CD4-positive, alpha-beta T cell (primary cell): ENCODE measurements at regions of chr11 and their contacts with region 1.

Region 1: GRCh38 chr11:34051349-34052035 is at the start of gene CAPRIN1:
- DNase-seq: peak; percentile 70 to 93 (median 80)
- ATAC-seq: peak; percentile 69
- H3K4me3 ChIP-seq: peak within 1 kb of the TSS; percentile 99
- H3K4me3 Mint-ChIP-seq: peak within 1 kb of the TSS; percentile 95
- H3K27ac ChIP-seq: peak within 1 kb of the TSS; percentile 98 to 99
- H3K27ac Mint-ChIP-seq: peak within 1 kb of the TSS; percentile 100
- H3K4me1 ChIP-seq: peaks cover 25% of the 10 kb centered on the region
- H3K4me1 Mint-ChIP-seq: peaks cover 26% of the 10 kb centered on the region
- H3K27me3 ChIP-seq: no peaks in the 10 kb centered on the region
- H3K27me3 Mint-ChIP-seq: no peaks in the 10 kb centered on the region
- CTCF ChIP-seq: no peak
- total RNA-seq, gene CAPRIN1: 107 TPM

Region 2: DNA sequence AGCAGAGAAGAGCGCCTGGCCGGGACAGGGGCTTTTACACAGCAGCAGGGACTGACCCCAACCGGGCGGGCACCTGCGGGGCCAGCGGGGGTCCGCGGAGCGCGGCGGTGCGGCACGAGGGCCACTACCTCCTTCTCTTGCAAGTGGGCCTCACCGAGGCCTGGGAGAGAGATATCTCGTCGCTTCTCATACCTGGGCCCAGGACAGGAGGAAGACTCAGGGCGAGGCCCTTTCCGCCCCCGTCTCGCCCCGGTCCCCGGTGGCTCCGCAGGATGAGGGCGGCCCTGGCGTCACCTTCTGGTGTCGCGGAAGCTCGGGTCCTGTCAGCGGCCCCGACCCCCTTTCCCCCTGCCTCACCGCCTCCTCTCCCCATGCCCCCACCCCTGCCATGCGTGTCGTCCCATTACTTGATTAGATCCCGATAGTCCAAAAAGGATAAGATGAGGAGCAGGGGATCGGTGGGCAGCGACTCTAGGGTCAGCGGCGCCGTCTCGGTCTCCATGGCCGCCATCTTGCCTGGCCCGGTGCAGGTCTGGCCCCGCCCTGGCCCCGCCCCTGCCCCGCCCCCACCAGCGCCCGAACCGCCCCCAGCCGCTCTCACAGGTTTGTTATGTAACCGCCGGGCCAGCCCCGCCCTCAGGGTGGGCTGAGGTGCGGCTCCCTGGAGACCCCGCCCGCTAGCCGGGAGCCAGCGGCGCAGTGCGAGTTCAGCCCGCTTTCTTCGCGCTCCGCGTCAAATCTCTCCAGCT is 277.3 kb before region 1 on chr11 and contains the start of gene FBXO3:
- CTCF ChIA-PET with region 1: no interaction called
- POLR2A ChIA-PET with region 1: interaction called, 4 read pairs
- intact Hi-C with region 1: loop called in 1 of 2 experiments (anchors 5 kb)
- DNase-seq: peak; percentile 78 to 95 (median 86)
- ATAC-seq: peak; percentile 86
- H3K4me3 ChIP-seq: peak within 1 kb of the TSS; percentile 73
- H3K4me3 Mint-ChIP-seq: peak within 1 kb of the TSS; percentile 97
- H3K27ac ChIP-seq: peak within 1 kb of the TSS; percentile 64 to 75
- H3K27ac Mint-ChIP-seq: peak within 1 kb of the TSS; percentile 97
- H3K4me1 ChIP-seq: peaks cover 41% of the 10 kb centered on the region
- H3K4me1 Mint-ChIP-seq: peaks cover 61% of the 10 kb centered on the region
- H3K27me3 ChIP-seq: peaks cover 0 to 7% of the 10 kb centered on the region in 2 experiments
- H3K27me3 Mint-ChIP-seq: peaks cover 8% of the 10 kb centered on the region
- CTCF ChIP-seq: no peak
- total RNA-seq, gene FBXO3: 62.0 to 63.4 TPM

Region 3: GRCh38 chr11:34063061-34063795 is 11.7 kb after region 1 on chr11:
- CTCF ChIA-PET with region 1: interaction called, 5 read pairs
- POLR2A ChIA-PET with region 1: interaction called, 13 read pairs
- intact Hi-C with region 1: no loop called
- DNase-seq: no peak
- ATAC-seq: no peak
- H3K4me3 ChIP-seq: no peak overlapping the region
- H3K4me3 Mint-ChIP-seq: peak overlapping the region; percentile 3
- H3K27ac ChIP-seq: no peak overlapping the region
- H3K27ac Mint-ChIP-seq: peak overlapping the region; percentile 66
- H3K4me1 ChIP-seq: peaks cover 45% of the 10 kb centered on the region
- H3K4me1 Mint-ChIP-seq: peaks cover 72% of the 10 kb centered on the region
- H3K27me3 ChIP-seq: no peaks in the 10 kb centered on the region
- H3K27me3 Mint-ChIP-seq: no peaks in the 10 kb centered on the region
- CTCF ChIP-seq: no peak

Region 4: DNA sequence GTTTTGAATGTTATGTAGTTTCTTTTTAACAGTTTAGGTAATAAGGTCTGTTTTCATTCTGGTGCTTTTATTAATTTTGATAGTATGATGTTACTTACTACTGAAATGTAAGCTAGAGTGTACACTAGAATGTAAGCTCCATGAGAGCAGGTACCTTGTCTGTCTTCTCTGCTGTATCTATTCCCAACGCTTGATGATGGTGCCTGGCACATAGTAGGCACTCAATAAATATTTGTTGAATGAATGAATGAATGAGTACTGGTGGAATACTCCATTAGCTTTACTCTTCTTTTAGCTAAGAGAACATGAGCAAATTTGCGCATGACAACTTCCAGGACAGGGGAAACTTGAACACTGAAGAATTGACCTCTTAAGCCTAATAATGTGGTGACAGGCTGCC is 47.3 kb after region 1 on chr11:
- CTCF ChIA-PET with region 1: no interaction called
- POLR2A ChIA-PET with region 1: interaction called, 118 read pairs
- intact Hi-C with region 1: no loop called
- DNase-seq: no peak
- ATAC-seq: no peak
- H3K4me3 ChIP-seq: no peak overlapping the region
- H3K4me3 Mint-ChIP-seq: no peak overlapping the region
- H3K27ac ChIP-seq: no peak overlapping the region
- H3K27ac Mint-ChIP-seq: no peak overlapping the region
- H3K4me1 ChIP-seq: no peaks in the 10 kb centered on the region
- H3K4me1 Mint-ChIP-seq: peaks cover 13% of the 10 kb centered on the region
- H3K27me3 ChIP-seq: no peaks in the 10 kb centered on the region
- H3K27me3 Mint-ChIP-seq: no peaks in the 10 kb centered on the region
- CTCF ChIP-seq: no peak

Region 5: GRCh38 chr11:34438529-34439507 is 387.3 kb after region 1 on chr11 and contains the start of gene CAT:
- CTCF ChIA-PET with region 1: no interaction called
- POLR2A ChIA-PET with region 1: no interaction called
- intact Hi-C with region 1: loop called in 1 of 2 experiments (anchors 5 kb)
- DNase-seq: peak; percentile 93 to 98 (median 98)
- ATAC-seq: peak; percentile 95
- H3K4me3 ChIP-seq: peak within 1 kb of the TSS; percentile 81
- H3K4me3 Mint-ChIP-seq: peak within 1 kb of the TSS; percentile 93
- H3K27ac ChIP-seq: peak within 1 kb of the TSS; percentile 57 to 77
- H3K27ac Mint-ChIP-seq: peak within 1 kb of the TSS; percentile 88
- H3K4me1 ChIP-seq: peaks cover 22% of the 10 kb centered on the region
- H3K4me1 Mint-ChIP-seq: peaks cover 47% of the 10 kb centered on the region
- H3K27me3 ChIP-seq: no peaks in the 10 kb centered on the region
- H3K27me3 Mint-ChIP-seq: no peaks in the 10 kb centered on the region
- CTCF ChIP-seq: no peak
- total RNA-seq, gene CAT: 8.5 to 9.8 TPM